CD4-positive, alpha-beta T cell (primary cell): ENCODE measurements at regions of chr10 and their contacts with region 1.

Region 1: GRCh38 chr10:102743588-102744373 is at the start of gene WBP1L:
- DNase-seq: peak; percentile 88 to 99 (median 94)
- ATAC-seq: peak; percentile 97
- H3K4me3 ChIP-seq: peak within 1 kb of the TSS; percentile 99
- H3K4me3 Mint-ChIP-seq: peak within 1 kb of the TSS; percentile 94
- H3K27ac ChIP-seq: peak within 1 kb of the TSS; percentile 73 to 78
- H3K27ac Mint-ChIP-seq: peak within 1 kb of the TSS; percentile 86
- H3K4me1 ChIP-seq: peaks cover 27% of the 10 kb centered on the region
- H3K4me1 Mint-ChIP-seq: peaks cover 51% of the 10 kb centered on the region
- H3K27me3 ChIP-seq: no peaks in the 10 kb centered on the region
- H3K27me3 Mint-ChIP-seq: no peaks in the 10 kb centered on the region
- CTCF ChIP-seq: no peak
- total RNA-seq, gene WBP1L: 6.1 to 6.5 TPM

Region 2: DNA sequence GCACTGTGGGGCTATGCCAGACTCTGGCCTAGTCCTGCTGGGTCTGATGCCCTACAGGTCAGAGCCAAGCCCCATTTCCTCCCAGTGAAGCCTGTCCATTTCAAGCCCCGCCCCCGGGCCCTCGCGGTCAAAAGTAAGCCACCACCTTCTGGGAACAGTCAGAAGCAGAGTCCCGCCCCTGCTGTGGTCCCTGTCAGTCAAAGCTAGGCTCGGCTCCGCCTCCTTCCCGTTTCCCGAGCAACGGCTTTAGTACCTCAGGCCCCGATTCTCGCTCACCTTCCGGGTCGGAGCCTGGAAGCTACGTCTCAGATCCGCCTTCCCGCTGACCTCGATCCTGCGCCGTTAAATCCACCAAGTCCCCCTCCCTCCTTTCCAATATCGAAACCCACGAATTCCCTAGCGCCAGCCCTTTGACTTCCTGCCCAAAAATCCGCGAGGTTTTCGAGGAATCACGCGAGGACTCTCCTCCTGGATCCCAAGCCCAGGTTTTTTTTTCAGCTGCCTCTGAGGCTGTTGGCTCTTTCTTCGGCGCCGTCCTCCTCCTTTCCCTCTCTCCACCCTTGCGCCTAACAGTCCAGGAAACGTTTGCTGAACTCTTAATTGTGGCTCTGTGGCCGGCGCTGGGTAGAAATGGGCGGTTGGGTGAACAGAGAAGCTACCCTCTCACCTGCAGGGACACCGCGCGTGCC is 1701.0 kb before region 1 on chr10:
- CTCF ChIA-PET with region 1: no interaction called
- POLR2A ChIA-PET with region 1: no interaction called
- intact Hi-C with region 1: loop called in 1 of 2 experiments (anchors 10 kb)
- DNase-seq: peak; percentile 58 to 93 (median 77)
- ATAC-seq: peak; percentile 74
- H3K4me3 ChIP-seq: peak overlapping the region; percentile 66
- H3K4me3 Mint-ChIP-seq: peak overlapping the region; percentile 95
- H3K27ac ChIP-seq: peak overlapping the region in 1 of 2 donors; percentile 39
- H3K27ac Mint-ChIP-seq: peak overlapping the region; percentile 76
- H3K4me1 ChIP-seq: peaks cover 24% of the 10 kb centered on the region
- H3K4me1 Mint-ChIP-seq: peaks cover 26% of the 10 kb centered on the region
- H3K27me3 ChIP-seq: peaks cover 10 to 15% of the 10 kb centered on the region in 2 experiments
- H3K27me3 Mint-ChIP-seq: peaks cover 17% of the 10 kb centered on the region
- CTCF ChIP-seq: no peak

Region 3: GRCh38 chr10:102132563-102133372 is 611.0 kb before region 1 on chr10 and contains the start of gene PPRC1:
- CTCF ChIA-PET with region 1: no interaction called
- POLR2A ChIA-PET with region 1: no interaction called
- intact Hi-C with region 1: loop called in 1 of 2 experiments (anchors 10 kb)
- DNase-seq: peak; percentile 93 to 99 (median 95)
- ATAC-seq: peak; percentile 94
- H3K4me3 ChIP-seq: peak within 1 kb of the TSS; percentile 98
- H3K4me3 Mint-ChIP-seq: peak within 1 kb of the TSS; percentile 98
- H3K27ac ChIP-seq: peak within 1 kb of the TSS; percentile 81 to 82
- H3K27ac Mint-ChIP-seq: peak within 1 kb of the TSS; percentile 87
- H3K4me1 ChIP-seq: peaks cover 40% of the 10 kb centered on the region
- H3K4me1 Mint-ChIP-seq: peaks cover 39% of the 10 kb centered on the region
- H3K27me3 ChIP-seq: no peaks in the 10 kb centered on the region
- H3K27me3 Mint-ChIP-seq: no peaks in the 10 kb centered on the region
- CTCF ChIP-seq: peak; percentile 96
- total RNA-seq, gene PPRC1: 22.0 to 22.9 TPM

Region 4: GRCh38 chr10:102641880-102642735 is 101.7 kb before region 1 on chr10:
- CTCF ChIA-PET with region 1: no interaction called
- POLR2A ChIA-PET with region 1: interaction called, 32 read pairs
- intact Hi-C with region 1: no loop called
- DNase-seq: peak; percentile 94 to 100 (median 98)
- ATAC-seq: peak; percentile 70
- H3K4me3 ChIP-seq: peak overlapping the region; percentile 75
- H3K4me3 Mint-ChIP-seq: peak overlapping the region; percentile 96
- H3K27ac ChIP-seq: peak overlapping the region; percentile 95 to 96
- H3K27ac Mint-ChIP-seq: peak overlapping the region; percentile 95
- H3K4me1 ChIP-seq: peaks cover 28% of the 10 kb centered on the region
- H3K4me1 Mint-ChIP-seq: peaks cover 31% of the 10 kb centered on the region
- H3K27me3 ChIP-seq: no peaks in the 10 kb centered on the region
- H3K27me3 Mint-ChIP-seq: no peaks in the 10 kb centered on the region
- CTCF ChIP-seq: no peak

Region 5: DNA sequence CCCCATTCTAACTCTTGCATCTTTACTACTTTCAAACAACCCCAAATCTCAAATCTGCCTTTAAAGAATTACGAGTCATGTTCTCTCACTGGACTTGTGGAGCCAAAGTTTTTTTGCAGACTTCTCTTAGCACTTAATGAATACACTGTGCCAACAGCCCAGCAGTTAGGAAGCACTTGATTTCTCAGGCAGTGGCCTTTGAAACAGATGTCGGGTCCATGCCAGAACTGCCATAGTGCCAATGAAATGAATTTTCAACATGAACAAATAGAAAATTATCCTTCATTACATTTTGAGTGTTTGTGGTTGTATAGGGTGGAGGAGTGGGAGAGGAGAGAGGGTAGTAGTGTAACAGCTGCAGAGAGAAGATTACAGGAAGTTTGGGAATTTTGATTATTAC is 116.1 kb after region 1 on chr10:
- CTCF ChIA-PET with region 1: no interaction called
- POLR2A ChIA-PET with region 1: no interaction called
- intact Hi-C with region 1: loop called in 1 of 2 experiments (anchors 5 kb)
- DNase-seq: no peak
- ATAC-seq: no peak
- H3K4me3 ChIP-seq: no peak overlapping the region
- H3K4me3 Mint-ChIP-seq: no peak overlapping the region
- H3K27ac ChIP-seq: no peak overlapping the region
- H3K27ac Mint-ChIP-seq: no peak overlapping the region
- H3K4me1 ChIP-seq: peaks cover 4% of the 10 kb centered on the region
- H3K4me1 Mint-ChIP-seq: peaks cover 7% of the 10 kb centered on the region
- H3K27me3 ChIP-seq: no peaks in the 10 kb centered on the region
- H3K27me3 Mint-ChIP-seq: no peaks in the 10 kb centered on the region
- CTCF ChIP-seq: no peak

Region 6: DNA sequence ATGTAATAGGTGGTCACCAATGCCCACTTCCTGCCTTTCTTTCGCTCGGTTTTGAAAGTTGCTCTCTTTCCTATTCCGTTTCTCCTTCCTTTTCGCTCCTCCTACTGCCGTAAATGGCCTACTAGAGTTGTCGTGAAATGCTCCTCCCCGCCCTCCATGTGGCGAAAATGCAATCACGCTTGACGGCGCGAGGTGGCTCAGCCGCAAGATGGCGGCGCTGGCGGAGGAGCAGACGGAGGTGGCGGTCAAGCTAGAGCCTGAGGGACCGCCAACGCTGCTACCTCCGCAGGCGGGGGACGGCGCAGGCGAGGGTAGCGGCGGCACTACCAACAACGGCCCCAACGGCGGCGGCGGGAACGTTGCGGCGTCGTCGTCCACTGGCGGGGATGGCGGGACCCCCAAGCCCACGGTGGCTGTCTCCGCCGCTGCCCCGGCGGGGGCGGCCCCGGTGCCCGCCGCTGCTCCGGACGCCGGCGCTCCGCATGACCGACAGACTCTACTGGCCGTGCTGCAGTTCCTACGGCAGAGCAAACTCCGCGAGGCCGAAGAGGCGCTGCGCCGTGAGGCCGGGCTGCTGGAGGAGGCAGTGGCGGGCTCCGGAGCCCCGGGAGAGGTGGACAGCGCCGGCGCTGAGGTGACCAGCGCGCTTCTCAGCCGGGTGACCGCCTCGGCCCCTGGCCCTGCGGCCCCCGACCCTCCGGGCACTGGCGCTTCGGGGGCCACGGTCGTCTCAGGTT is 624.2 kb after region 1 on chr10 and contains the start of gene TAF5:
- CTCF ChIA-PET with region 1: no interaction called
- POLR2A ChIA-PET with region 1: no interaction called
- intact Hi-C with region 1: loop called in 1 of 2 experiments (anchors 10 kb)
- DNase-seq: peak; percentile 78 to 96 (median 85)
- ATAC-seq: peak; percentile 61
- H3K4me3 ChIP-seq: peak within 1 kb of the TSS; percentile 60
- H3K4me3 Mint-ChIP-seq: peak within 1 kb of the TSS; percentile 100
- H3K27ac ChIP-seq: peak within 1 kb of the TSS; percentile 55 to 83
- H3K27ac Mint-ChIP-seq: peak within 1 kb of the TSS; percentile 80
- H3K4me1 ChIP-seq: peaks cover 22% of the 10 kb centered on the region
- H3K4me1 Mint-ChIP-seq: peaks cover 23% of the 10 kb centered on the region
- H3K27me3 ChIP-seq: no peaks in the 10 kb centered on the region
- H3K27me3 Mint-ChIP-seq: no peaks in the 10 kb centered on the region
- CTCF ChIP-seq: peak; percentile 22
- total RNA-seq, gene TAF5: 3.8 to 4.0 TPM